Left cardiac atrium (tissue), 4 donors: ENCODE measurements at regions of chr18 and their contacts with region 1.

Region 1: GRCh38 chr18:48711651-48712486 is 173.0 kb downstream of the CTIF start:
- DNase-seq: peak; percentile 58
- ATAC-seq: peak; percentile 30 to 73

Region 2: DNA sequence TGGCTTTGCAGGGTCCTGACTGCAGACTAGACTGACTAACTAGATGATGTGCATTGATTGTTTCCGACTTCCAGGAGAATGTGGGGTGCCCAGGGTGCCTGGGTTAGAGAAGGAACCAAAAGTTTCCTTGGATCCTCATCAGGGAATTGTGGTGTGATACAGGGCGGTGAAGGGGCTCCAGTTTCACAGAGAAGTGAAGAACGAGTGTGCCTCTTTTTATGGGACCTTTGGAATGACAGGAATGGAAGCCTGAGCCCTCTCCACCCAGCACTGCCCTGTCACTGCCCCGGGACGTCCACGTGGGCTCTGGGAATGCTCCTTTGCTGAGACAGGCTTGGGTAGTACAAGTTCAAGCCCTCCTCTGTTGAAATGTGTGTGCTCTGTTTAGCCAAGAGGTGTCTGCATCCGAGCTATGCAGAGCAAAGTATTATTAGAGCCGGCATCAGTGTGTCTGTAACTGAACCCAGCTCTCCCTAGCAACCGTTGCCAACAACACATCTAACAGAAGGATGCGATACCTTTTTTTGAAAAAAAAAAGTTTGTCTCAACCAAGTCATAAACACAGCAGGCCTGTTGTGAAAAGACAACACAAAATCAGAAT is 55.3 kb after region 1 on chr18:
- intact Hi-C with region 1: loop called in 1 of 2 experiments (anchors 5 kb)
- DNase-seq: peak; percentile 50
- ATAC-seq: peak; percentile 81 to 83

Region 3: DNA sequence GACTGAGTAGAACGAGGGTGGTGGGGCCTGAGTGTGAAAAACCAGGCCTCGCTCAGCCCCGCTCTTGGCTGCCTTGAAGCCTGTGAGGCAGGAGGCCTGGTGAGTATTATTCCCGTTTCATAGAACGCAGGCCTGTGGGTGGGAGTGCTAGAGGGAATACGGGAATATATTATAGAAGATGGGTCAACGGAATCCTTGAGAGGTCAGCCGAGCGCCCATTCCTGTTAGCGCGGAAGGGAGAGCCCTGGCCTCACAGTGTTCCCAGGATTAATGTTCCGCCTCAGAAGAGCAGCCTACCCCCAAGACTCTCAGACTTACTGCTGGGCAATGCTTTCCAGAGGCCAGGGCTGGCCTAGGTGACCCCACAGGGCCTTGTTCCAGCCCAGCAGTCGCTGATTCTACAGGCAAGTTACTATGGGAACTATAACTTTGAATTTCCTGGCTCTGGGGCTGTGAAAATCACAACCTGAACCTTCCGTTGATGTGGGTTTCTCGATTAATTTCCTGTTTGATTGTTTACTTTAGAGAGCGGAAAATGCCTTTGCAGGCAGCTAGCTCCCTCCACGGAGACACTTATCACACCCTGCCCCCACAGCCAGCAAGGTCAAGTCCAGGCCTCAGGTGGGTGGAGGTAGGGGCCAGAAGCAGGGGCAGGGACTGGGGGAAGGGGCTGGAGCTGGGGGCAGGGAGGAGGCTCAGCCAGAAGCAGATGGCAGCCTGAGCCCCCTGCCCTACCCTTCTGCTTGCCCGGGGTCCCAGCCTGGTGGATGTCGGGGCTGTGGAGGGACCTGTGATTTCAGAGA is 130.6 kb after region 1 on chr18:
- intact Hi-C with region 1: loop called in 1 of 2 experiments (anchors 10 kb)
- DNase-seq: peak; percentile 75
- ATAC-seq: peak; percentile 38 to 52

Region 4: DNA sequence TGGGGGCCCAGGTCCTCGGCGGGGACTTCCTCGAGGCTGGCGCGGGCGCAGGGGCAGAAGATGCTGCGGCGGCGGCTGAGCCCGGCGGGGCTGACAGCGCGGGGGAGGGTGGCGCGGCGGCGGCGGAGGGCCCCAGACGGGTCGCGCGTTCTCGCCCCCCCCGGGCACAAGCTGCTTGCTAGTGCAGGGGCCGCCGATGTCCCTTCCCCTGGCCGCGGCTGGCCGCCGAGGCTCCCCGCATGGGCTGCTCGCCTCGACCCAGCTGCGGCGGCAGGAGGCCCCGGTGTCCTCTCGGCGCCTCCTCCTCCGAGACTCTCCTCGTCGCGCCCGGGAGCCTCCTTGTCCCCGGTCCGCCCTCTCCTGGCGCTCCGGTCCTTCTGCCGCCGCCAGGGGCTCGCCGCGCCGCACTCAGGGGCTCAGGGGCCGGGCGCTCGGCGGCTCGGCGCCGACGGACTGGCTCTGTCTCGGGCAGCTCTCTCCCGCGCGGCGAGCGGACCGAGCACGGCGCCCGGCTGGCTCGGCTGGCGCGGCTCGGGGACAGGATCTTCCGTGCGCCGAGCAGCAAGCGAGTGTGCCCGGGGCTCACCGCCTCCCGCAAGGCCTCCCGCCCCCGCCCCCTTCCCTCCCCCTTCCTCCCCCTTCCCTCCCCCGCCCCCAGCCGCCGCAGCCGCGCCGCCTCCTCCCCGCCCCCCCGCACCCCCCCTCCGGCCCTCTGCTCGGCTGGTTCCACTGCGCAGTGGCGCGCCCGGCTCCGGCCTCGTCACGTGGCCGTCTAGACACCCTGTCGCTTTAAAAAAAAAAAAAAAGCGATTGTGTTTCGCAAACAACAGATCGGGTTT is 239.8 kb after region 1 on chr18:
- intact Hi-C with region 1: loop called in 1 of 2 experiments (anchors 10 kb)
- DNase-seq: peak; percentile 92
- ATAC-seq: peak; percentile 76 to 78

Region 5: GRCh38 chr18:49041435-49042245 is 329.8 kb after region 1 on chr18:
- intact Hi-C with region 1: loop called in 1 of 2 experiments (anchors 10 kb)
- DNase-seq: peak; percentile 51
- ATAC-seq: peak; percentile 73 to 78

Region 6: GRCh38 chr18:49412679-49413078 is 700.8 kb after region 1 on chr18:
- intact Hi-C with region 1: loop called in 1 of 2 experiments (anchors 10 kb)
- DNase-seq: no peak
- ATAC-seq: no peak